GM12878 (cell line): ENCODE measurements at regions of chr5 and their contacts with region 1.

Region 1: GRCh38 chr5:93899026-93899600 is 157.7 kb upstream of the POU5F2 start:
- DNase-seq: no peak
- ATAC-seq: peak; percentile 81
- H3K4me3 ChIP-seq: no peak overlapping the region
- H3K27ac ChIP-seq: no peak overlapping the region
- H3K4me1 ChIP-seq: no peaks in the 10 kb centered on the region
- H3K27me3 ChIP-seq: no peaks in the 10 kb centered on the region
- CTCF ChIP-seq: peak; percentile 34 to 46 (median 40); a peak in 4 of 6 replicates
- EP300 ChIP-seq: no peak
- POLR2A ChIP-seq: no peak
- RAD21 ChIP-seq: peak; percentile 32; the same call in 1 of the 2 replicates

Region 2: GRCh38 chr5:93874080-93874479 is 25.0 kb before region 1 on chr5:
- CTCF ChIA-PET with region 1: interaction called, 12 read pairs
- POLR2A ChIA-PET with region 1: no interaction called
- RAD21 ChIA-PET with region 1: no interaction called
- SMC1A ChIA-PET with region 1: interaction called, 5 read pairs
- in situ Hi-C with region 1: no loop called
- intact Hi-C with region 1: no loop called
- DNase-seq: no peak
- ATAC-seq: peak; percentile 70
- H3K4me3 ChIP-seq: no peak overlapping the region
- H3K27ac ChIP-seq: no peak overlapping the region
- H3K4me1 ChIP-seq: no peaks in the 10 kb centered on the region; the same call in 1 of the 2 replicates
- H3K27me3 ChIP-seq: no peaks in the 10 kb centered on the region
- CTCF ChIP-seq: no peak
- EP300 ChIP-seq: no peak
- POLR2A ChIP-seq: no peak
- RAD21 ChIP-seq: no peak

Region 3: DNA sequence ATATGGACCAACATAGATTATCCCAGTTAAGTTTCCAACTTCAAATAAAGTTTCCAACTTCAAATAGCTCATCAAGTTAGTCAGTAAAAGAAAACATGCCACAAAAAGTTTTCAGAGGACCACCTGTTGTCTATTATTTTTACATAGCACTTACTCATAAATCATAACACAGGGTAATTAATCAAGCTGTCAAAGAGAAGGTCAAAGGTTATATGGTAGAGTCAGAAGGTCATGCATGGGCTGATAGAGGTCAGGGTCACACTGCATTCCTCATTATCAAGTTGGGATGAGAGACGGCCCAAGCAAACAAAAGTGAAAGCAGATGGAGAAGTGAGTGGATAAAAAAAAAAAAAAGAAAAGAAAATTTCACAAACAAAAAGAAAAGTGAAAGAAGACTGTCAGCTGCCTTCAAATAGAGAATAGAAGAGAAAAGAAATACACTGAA is 12.2 kb before region 1 on chr5:
- CTCF ChIA-PET with region 1: interaction called, 12 read pairs
- POLR2A ChIA-PET with region 1: no interaction called
- RAD21 ChIA-PET with region 1: no interaction called
- SMC1A ChIA-PET with region 1: interaction called, 3 read pairs
- in situ Hi-C with region 1: no loop called
- intact Hi-C with region 1: no loop called
- DNase-seq: no peak
- ATAC-seq: no peak; the same call in 1 of the 3 replicates
- H3K4me3 ChIP-seq: no peak overlapping the region
- H3K27ac ChIP-seq: no peak overlapping the region
- H3K4me1 ChIP-seq: no peaks in the 10 kb centered on the region
- H3K27me3 ChIP-seq: no peaks in the 10 kb centered on the region
- CTCF ChIP-seq: no peak
- EP300 ChIP-seq: no peak
- POLR2A ChIP-seq: no peak
- RAD21 ChIP-seq: no peak

Region 4: DNA sequence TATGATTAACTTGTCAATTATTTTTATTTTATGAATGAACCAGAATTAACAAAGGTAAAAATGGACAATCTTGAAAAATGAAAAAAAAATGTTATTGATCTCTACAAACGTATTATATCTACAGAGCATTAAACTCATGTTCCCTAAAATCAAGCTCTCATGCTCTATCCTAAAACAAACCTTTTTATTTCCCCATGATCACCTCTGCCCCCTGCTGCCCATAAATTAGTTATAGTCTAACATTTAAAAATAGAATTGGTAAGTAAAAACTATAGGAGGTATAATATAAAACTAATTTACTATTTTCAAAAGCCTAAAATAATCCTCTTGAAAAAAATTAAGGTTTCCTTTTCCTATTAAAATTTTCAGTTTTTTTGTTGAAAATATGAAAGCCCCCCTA is 10.2 kb after region 1 on chr5:
- CTCF ChIA-PET with region 1: interaction called, 17 read pairs
- POLR2A ChIA-PET with region 1: no interaction called
- RAD21 ChIA-PET with region 1: interaction called, 4 read pairs
- SMC1A ChIA-PET with region 1: interaction called, 5 read pairs
- in situ Hi-C with region 1: no loop called
- intact Hi-C with region 1: no loop called
- DNase-seq: no peak
- ATAC-seq: no peak
- H3K4me3 ChIP-seq: no peak overlapping the region
- H3K27ac ChIP-seq: no peak overlapping the region
- H3K4me1 ChIP-seq: no peaks in the 10 kb centered on the region
- H3K27me3 ChIP-seq: no peaks in the 10 kb centered on the region
- CTCF ChIP-seq: 0 out of 6 replicates have a peak, but pooled peaks of 2 of the 3 experiments have one; percentile 3 to 8
- EP300 ChIP-seq: no peak
- POLR2A ChIP-seq: no peak
- RAD21 ChIP-seq: 0 out of 2 replicates have a peak, but pooled peaks have one; percentile 6

Region 5: GRCh38 chr5:94017579-94017978 is 118.5 kb after region 1 on chr5:
- CTCF ChIA-PET with region 1: no interaction called
- POLR2A ChIA-PET with region 1: no interaction called
- RAD21 ChIA-PET with region 1: no interaction called
- SMC1A ChIA-PET with region 1: no interaction called
- in situ Hi-C with region 1: no loop called
- intact Hi-C with region 1: no loop called
- DNase-seq: no peak
- ATAC-seq: no peak
- H3K4me3 ChIP-seq: no peak overlapping the region
- H3K27ac ChIP-seq: no peak overlapping the region
- H3K4me1 ChIP-seq: no peaks in the 10 kb centered on the region
- H3K27me3 ChIP-seq: no peaks in the 10 kb centered on the region
- CTCF ChIP-seq: no peak
- EP300 ChIP-seq: no peak
- POLR2A ChIP-seq: no peak
- RAD21 ChIP-seq: no peak

Region 6: DNA sequence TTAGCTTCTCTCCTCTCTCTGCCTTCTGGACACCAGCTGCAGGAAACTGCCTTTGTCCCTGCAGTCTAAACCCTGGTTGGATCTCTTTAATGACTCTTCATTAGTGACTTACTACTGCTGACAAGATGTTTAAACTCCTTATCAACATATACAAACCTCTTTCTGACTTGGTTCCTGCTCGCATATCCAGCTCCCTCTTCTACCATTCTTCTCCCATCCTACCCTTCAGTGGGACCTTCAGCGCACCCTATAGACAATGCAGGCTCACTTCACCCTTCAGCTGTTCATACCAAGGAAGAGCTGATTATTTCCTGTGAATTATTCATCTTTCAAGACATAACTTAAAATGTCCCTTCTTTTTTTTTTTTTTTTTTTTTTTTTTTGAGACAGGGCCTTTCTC is 282.8 kb after region 1 on chr5:
- CTCF ChIA-PET with region 1: interaction called, 13 read pairs
- POLR2A ChIA-PET with region 1: no interaction called
- RAD21 ChIA-PET with region 1: interaction called, 4 read pairs
- SMC1A ChIA-PET with region 1: interaction called, 4 read pairs
- in situ Hi-C with region 1: no loop called
- intact Hi-C with region 1: no loop called
- DNase-seq: no peak
- ATAC-seq: peak; percentile 79
- H3K4me3 ChIP-seq: no peak overlapping the region
- H3K27ac ChIP-seq: no peak overlapping the region
- H3K4me1 ChIP-seq: no peaks in the 10 kb centered on the region
- H3K27me3 ChIP-seq: no peaks in the 10 kb centered on the region
- CTCF ChIP-seq: peak; percentile 27 to 31 (median 28); a peak in 4 of 6 replicates
- EP300 ChIP-seq: no peak
- POLR2A ChIP-seq: no peak
- RAD21 ChIP-seq: 0 out of 2 replicates have a peak, but pooled peaks have one; percentile 34